B cell (primary cell): ENCODE measurements at regions of chr12 and their contacts with region 1.

Region 1: GRCh38 chr12:9039397-9039977 is 50.1 kb downstream of the KLRG1 start:
- DNase-seq: peak; percentile 57
- ATAC-seq: no peak
- H3K4me3 ChIP-seq: no peak overlapping the region
- H3K4me3 Mint-ChIP-seq: no peak overlapping the region
- H3K27ac ChIP-seq: no peak overlapping the region
- H3K27ac Mint-ChIP-seq: no peak overlapping the region
- H3K4me1 ChIP-seq: no peaks in the 10 kb centered on the region
- H3K4me1 Mint-ChIP-seq: no peaks in the 10 kb centered on the region
- H3K27me3 ChIP-seq: no peaks in the 10 kb centered on the region
- H3K27me3 Mint-ChIP-seq: peaks cover 4% of the 10 kb centered on the region
- CTCF ChIP-seq: peak; percentile 93

Region 2: GRCh38 chr12:8662593-8662992 is 376.9 kb before region 1 on chr12 and contains the start of gene MFAP5:
- CTCF ChIA-PET with region 1: interaction called, 13 read pairs
- POLR2A ChIA-PET with region 1: no interaction called
- intact Hi-C with region 1: loop called (anchors 1 kb)
- DNase-seq: no peak
- ATAC-seq: no peak
- H3K4me3 ChIP-seq: no peak within 1 kb of the TSS
- H3K4me3 Mint-ChIP-seq: no peak within 1 kb of the TSS
- H3K27ac ChIP-seq: no peak within 1 kb of the TSS
- H3K27ac Mint-ChIP-seq: no peak within 1 kb of the TSS
- H3K4me1 ChIP-seq: peaks cover 6 to 8% of the 10 kb centered on the region in 2 donors
- H3K4me1 Mint-ChIP-seq: peaks cover 4% of the 10 kb centered on the region
- H3K27me3 ChIP-seq: no peaks in the 10 kb centered on the region
- H3K27me3 Mint-ChIP-seq: no peaks in the 10 kb centered on the region
- CTCF ChIP-seq: no peak
- total RNA-seq, gene MFAP5: 0.94 TPM in 1 of 2 replicates, not detected in the other

Region 3: GRCh38 chr12:8681041-8681902 is 358.2 kb before region 1 on chr12:
- CTCF ChIA-PET with region 1: interaction called, 19 read pairs
- POLR2A ChIA-PET with region 1: interaction called, 3 read pairs
- intact Hi-C with region 1: no loop called
- DNase-seq: no peak
- ATAC-seq: no peak
- H3K4me3 ChIP-seq: no peak overlapping the region
- H3K4me3 Mint-ChIP-seq: no peak overlapping the region
- H3K27ac ChIP-seq: no peak overlapping the region
- H3K27ac Mint-ChIP-seq: no peak overlapping the region
- H3K4me1 ChIP-seq: no peaks in the 10 kb centered on the region
- H3K4me1 Mint-ChIP-seq: peaks cover 6% of the 10 kb centered on the region
- H3K27me3 ChIP-seq: no peaks in the 10 kb centered on the region
- H3K27me3 Mint-ChIP-seq: peaks cover 9% of the 10 kb centered on the region
- CTCF ChIP-seq: no peak

Region 4: DNA sequence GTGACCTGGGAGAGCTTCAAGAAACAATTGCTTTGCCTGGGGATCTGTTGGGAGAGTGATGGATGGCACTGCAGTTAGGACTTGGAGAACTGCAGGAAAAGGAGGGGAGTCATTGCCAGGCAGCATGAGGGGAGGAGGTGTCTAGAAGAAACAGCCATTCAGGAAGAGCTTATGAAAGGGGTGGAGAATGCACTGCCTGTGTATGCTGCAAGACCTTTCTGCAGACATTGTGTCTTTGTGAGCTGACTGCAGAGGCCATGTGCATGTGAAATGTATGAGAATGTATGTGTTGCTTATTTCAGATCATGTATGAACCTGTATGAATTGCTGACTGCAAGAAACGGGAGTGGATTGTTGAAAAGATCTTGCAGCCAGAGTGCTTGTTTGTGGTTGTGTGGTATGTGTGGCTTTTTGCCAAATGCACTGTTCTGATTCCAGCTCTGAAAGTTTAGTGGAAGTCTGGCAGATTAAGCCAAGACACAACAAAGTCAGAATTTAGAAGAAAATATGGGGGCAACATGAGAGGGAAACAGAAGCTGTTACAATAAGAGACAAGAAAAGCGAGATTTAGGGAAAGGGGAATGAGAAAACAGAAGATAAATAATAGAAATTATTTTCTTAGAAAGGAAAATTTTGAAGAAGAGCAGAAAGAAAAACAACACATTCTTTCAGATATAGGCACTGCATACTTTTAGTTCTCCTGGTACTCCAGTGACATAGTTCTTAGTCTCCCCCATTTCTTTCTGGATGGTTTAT is 351.5 kb before region 1 on chr12:
- CTCF ChIA-PET with region 1: interaction called, 19 read pairs
- POLR2A ChIA-PET with region 1: no interaction called
- intact Hi-C with region 1: no loop called
- DNase-seq: no peak
- ATAC-seq: no peak
- H3K4me3 ChIP-seq: no peak overlapping the region
- H3K4me3 Mint-ChIP-seq: no peak overlapping the region
- H3K27ac ChIP-seq: no peak overlapping the region
- H3K27ac Mint-ChIP-seq: no peak overlapping the region
- H3K4me1 ChIP-seq: peaks cover 9 to 10% of the 10 kb centered on the region in 2 donors
- H3K4me1 Mint-ChIP-seq: peaks cover 11% of the 10 kb centered on the region
- H3K27me3 ChIP-seq: no peaks in the 10 kb centered on the region
- H3K27me3 Mint-ChIP-seq: peaks cover 21% of the 10 kb centered on the region
- CTCF ChIP-seq: no peak

Region 5: DNA sequence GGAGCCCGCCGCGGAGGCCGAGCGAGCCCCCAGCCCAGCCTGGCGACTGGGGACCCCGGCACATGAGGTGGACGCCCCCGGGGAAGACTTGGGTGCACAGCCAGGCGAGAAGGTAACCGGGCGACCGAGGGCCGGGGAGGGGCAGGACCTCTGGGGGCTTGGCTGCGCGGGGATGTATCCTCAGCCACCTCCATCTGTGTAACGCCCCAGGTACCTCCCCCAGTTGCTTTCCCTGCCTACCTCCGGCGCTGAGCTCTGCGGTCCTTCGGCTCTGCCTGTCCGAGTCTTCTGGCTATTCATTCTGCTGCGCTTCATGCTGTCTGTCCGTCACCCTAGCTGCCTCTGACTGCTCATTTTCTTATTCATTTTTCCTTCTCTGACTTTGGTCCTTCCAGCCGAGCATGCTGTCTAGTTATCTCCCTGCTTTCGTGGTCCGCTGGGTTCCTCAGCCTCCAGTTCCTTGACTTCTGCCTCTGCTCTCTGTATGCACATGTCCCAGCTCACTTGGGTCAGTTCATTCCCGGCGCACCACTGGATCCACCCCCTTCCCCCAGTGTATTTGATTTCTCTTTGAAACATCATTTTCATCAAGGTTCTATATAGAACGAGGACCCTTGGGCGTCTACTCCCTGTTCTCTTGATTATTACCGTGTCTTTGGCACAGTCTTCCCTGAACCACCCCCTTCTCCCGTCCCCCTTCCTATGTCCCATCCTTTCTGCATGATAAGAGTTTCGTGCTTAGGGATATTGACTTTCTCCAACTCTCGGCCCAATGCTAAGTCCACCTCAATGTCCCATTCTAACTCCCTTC is 124.6 kb before region 1 on chr12:
- CTCF ChIA-PET with region 1: interaction called, 7 read pairs
- POLR2A ChIA-PET with region 1: no interaction called
- intact Hi-C with region 1: loop called (anchors 10 kb)
- DNase-seq: peak; percentile 79
- ATAC-seq: peak; percentile 80
- H3K4me3 ChIP-seq: peak overlapping the region; percentile 64 to 87 (median 75)
- H3K4me3 Mint-ChIP-seq: no peak overlapping the region
- H3K27ac ChIP-seq: peak overlapping the region; percentile 31 to 47
- H3K27ac Mint-ChIP-seq: no peak overlapping the region
- H3K4me1 ChIP-seq: peaks cover 20 to 22% of the 10 kb centered on the region in 2 donors
- H3K4me1 Mint-ChIP-seq: peaks cover 26% of the 10 kb centered on the region
- H3K27me3 ChIP-seq: no peaks in the 10 kb centered on the region
- H3K27me3 Mint-ChIP-seq: no peaks in the 10 kb centered on the region
- CTCF ChIP-seq: no peak

Region 6: GRCh38 chr12:8949342-8950220 is 89.9 kb before region 1 on chr12 and contains the start of gene M6PR:
- CTCF ChIA-PET with region 1: interaction called, 9 read pairs
- POLR2A ChIA-PET with region 1: no interaction called
- intact Hi-C with region 1: loop called (anchors 1 kb)
- DNase-seq: peak; percentile 95
- ATAC-seq: peak; percentile 83
- H3K4me3 ChIP-seq: peak within 1 kb of the TSS; percentile 67 to 99 (median 91)
- H3K4me3 Mint-ChIP-seq: peak within 1 kb of the TSS; percentile 95
- H3K27ac ChIP-seq: peak within 1 kb of the TSS; percentile 97 to 98
- H3K27ac Mint-ChIP-seq: peak within 1 kb of the TSS; percentile 98
- H3K4me1 ChIP-seq: peaks cover 31 to 35% of the 10 kb centered on the region in 2 donors
- H3K4me1 Mint-ChIP-seq: peaks cover 44% of the 10 kb centered on the region
- H3K27me3 ChIP-seq: no peaks in the 10 kb centered on the region
- H3K27me3 Mint-ChIP-seq: no peaks in the 10 kb centered on the region
- CTCF ChIP-seq: peak; percentile 47
- total RNA-seq, gene M6PR: 199 and 204 TPM in 2 replicates

Region 7: DNA sequence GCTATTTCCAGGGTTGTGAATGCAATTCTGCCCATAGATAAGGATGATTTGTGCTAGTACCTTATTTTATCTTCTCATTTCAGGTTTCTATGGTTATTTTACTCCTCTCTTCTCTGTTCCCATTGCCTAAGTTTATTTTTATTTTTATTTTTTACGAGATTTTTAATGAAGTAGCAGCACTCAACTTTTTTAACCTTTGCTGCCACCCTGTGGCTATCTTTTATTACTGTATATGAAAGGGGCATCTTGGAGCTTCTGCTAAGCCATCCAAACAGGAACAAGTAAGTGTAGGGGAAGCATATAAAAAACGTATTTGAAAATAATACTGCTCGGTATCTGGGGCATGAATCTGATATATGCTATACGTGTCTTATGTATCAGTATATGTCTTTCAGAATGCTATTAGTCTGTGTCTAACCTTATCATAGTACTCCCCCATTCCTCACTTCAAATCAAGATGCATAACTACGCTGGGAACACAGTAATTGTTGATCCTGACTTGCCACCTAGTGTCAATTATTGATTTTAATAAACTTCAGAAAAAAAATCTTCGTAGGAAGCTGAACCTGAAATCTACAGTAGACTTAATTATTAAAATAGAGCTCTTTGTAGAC is 10.1 kb after region 1 on chr12:
- CTCF ChIA-PET with region 1: interaction called, 33 read pairs
- POLR2A ChIA-PET with region 1: no interaction called
- intact Hi-C with region 1: no loop called
- DNase-seq: peak; percentile 53
- ATAC-seq: peak; percentile 41
- H3K4me3 ChIP-seq: no peak overlapping the region
- H3K4me3 Mint-ChIP-seq: no peak overlapping the region
- H3K27ac ChIP-seq: no peak overlapping the region
- H3K27ac Mint-ChIP-seq: no peak overlapping the region
- H3K4me1 ChIP-seq: no peaks in the 10 kb centered on the region
- H3K4me1 Mint-ChIP-seq: no peaks in the 10 kb centered on the region
- H3K27me3 ChIP-seq: no peaks in the 10 kb centered on the region
- H3K27me3 Mint-ChIP-seq: peaks cover 10% of the 10 kb centered on the region
- CTCF ChIP-seq: peak; percentile 75